ENCODE measurements at regions of chr18 and their contacts with region 1.

Region 1: GRCh38 chr18:76493213-76494161 is 1.6 kb downstream of the ZNF516 start:
- DNase-seq: peak; percentile 56
- H3K4me3 ChIP-seq: peak overlapping the region; percentile 86
- H3K27ac ChIP-seq: peak overlapping the region; percentile 74
- H3K4me1 ChIP-seq: peaks cover 28% of the 10 kb centered on the region
- H3K27me3 ChIP-seq: no peaks in the 10 kb centered on the region
- CTCF ChIP-seq: no peak

Region 2: DNA sequence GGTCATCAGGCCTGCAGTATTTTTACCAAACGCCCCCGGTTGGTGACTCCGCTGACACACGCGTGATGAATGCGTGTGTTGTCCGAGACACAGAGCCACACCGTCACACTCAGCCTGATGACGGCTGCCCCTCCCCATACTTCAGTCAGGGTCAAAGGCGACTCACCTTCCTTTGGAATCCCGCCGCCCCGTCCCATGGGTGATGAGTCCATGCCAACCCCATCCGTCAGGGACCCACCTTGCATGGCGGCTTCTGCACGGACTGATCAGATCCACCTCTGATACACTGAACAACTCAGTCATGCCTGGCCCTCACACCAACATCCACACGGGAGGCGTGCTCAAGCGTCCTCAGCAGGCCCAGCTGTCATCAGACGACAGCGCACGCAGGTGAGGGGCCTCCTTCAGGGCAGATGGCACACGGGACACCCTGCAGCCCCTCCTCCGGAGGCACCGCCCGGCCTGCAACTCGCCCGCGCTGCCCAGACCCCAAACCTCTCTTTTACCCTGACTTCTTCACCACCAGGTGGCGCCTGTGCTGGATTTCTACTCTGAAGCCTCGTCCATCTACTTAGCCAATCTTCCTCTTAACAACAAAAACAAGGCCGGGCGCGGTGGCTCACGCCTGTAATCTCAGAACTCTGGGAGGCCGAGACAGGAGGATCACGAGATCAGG is 87.7 kb before region 1 on chr18:
- CTCF ChIA-PET with region 1: no interaction called
- POLR2A ChIA-PET with region 1: no interaction called
- intact Hi-C with region 1: loop called (anchors 5 kb)
- DNase-seq: peak; percentile 73
- H3K4me3 ChIP-seq: no peak overlapping the region
- H3K27ac ChIP-seq: no peak overlapping the region
- H3K4me1 ChIP-seq: no peaks in the 10 kb centered on the region
- H3K27me3 ChIP-seq: no peaks in the 10 kb centered on the region
- CTCF ChIP-seq: peak; percentile 78

Region 3: DNA sequence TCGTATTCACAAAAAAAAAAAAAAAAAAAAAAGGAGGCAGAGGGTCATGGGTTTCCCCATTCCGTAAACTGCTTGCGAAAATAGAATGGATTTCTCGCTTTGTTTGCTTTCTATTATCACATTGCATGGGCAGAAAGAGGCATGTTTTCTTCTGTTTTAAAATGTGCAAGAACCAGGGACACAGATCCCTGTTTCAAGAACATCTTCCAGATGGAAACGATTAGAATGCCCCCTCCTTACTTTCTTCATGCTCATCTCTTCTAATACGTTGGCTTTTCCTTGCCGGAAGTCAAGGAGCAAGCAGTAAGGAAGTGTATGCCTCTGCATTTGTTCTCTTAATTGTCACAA is 52.6 kb after region 1 on chr18:
- CTCF ChIA-PET with region 1: no interaction called
- POLR2A ChIA-PET with region 1: no interaction called
- intact Hi-C with region 1: loop called (anchors 2 kb)
- DNase-seq: peak; percentile 87
- H3K4me3 ChIP-seq: peak overlapping the region; percentile 6
- H3K27ac ChIP-seq: peak overlapping the region; percentile 62
- H3K4me1 ChIP-seq: peaks cover 48% of the 10 kb centered on the region
- H3K27me3 ChIP-seq: no peaks in the 10 kb centered on the region
- CTCF ChIP-seq: no peak

Region 4: DNA sequence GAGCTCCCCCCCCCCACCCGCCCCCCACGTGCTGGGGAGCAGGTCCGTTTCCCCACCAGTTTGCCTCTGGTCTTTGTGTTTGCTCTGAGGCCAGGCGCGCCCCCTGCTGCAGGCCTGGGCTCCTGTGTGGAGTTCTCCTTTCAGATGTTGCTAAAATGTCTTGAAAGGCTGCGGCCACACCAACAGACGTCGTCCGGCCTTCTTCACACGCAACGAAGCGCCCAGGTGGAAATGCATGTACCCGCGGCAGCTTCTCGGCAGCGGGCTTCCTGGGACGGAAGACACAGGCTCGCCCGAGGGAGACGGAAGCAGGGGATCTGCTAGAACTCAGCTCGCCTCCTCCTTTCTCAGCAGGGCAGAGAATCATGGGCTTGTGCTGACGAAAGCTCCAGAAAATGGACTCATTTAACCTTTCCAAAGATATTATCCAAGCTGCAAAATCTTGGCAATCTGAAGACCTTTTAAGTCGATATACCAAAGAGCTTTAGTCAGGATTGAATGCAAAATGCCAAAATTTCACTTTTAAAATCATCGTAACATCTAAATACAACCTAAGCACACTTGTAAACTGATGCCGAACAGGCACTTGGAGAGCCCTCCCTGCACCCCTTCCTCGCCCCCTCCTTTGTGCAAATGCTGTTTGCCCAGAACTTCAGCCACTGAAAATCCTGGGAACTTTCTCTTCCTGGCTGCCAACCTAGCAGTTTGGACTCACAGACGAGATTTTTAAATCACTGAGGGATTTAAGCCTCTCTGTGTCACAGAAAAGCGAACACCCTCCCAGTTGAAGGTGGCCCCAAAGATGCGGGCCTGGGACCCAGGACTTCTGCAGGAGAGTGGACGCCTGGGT is 127.1 kb after region 1 on chr18:
- CTCF ChIA-PET with region 1: no interaction called
- POLR2A ChIA-PET with region 1: no interaction called
- intact Hi-C with region 1: loop called (anchors 2 kb)
- DNase-seq: peak; percentile 82
- H3K4me3 ChIP-seq: peak overlapping the region; percentile 27
- H3K27ac ChIP-seq: peak overlapping the region; percentile 39
- H3K4me1 ChIP-seq: peaks cover 26% of the 10 kb centered on the region
- H3K27me3 ChIP-seq: no peaks in the 10 kb centered on the region
- CTCF ChIP-seq: peak; percentile 62

Measured in A673 (cell line).